Heart right ventricle (tissue), 16 donors: ENCODE measurements at regions of chr2 and their contacts with region 1.

Region 1: GRCh38 chr2:66434679-66435548 is at the start of gene MEIS1:
- DNase-seq: peak; percentile 87 to 92
- ATAC-seq: peak; percentile 84 to 91 (median 88)
- H3K4me3 ChIP-seq: peak within 1 kb of the TSS; percentile 39 to 87 (median 78)
- H3K27ac ChIP-seq: peak within 1 kb of the TSS; percentile 74 to 95 (median 90)
- H3K4me1 ChIP-seq: peaks cover 0 to 33% (median 0%) of the 10 kb centered on the region in 9 donors
- H3K27me3 ChIP-seq: peaks cover 0 to 98% (median 0%) of the 10 kb centered on the region in 7 donors
- CTCF ChIP-seq: no peak
- total RNA-seq, gene MEIS1: 24.8 to 63.8 (median 38.6) TPM

Region 2: DNA sequence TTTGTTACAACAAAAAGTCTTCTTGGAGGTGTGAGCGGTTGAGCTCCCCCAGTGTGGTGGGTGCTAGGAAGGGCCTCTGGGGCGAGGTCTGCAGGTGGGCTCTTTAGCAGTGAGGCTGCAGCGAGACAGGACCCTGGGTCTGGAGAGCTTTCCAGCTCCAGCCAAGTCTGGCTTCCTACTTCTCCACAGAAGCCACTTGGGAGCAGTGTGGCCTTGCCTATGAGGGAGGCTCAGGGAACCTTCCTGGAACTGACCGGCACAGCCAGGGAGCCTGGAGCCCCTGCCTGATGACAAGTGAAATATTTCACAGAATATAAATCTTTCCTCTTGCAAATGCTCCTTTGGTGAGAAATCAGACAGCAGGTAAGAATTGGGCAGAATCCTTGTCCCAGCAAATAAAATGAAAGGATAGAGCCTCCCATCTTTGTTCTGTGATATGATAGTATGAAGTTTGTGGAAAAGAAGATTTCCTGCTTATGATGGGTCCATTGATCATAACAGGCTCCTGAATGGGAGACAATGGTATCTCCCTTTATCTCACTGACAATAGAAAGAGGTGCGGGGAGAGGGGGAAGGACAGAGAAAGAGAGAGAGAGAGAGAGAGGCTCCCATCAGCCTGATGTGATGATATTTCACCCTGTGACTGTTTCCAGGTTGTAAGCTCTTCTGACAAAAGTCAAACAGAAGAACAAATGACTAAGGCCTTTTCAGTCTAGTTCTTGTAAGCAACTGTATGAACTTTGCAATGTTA is 712.7 kb before region 1 on chr2:
- intact Hi-C with region 1: loop called in 1 of 10 experiments (anchors 2 kb)
- DNase-seq: peak; percentile 20 to 32
- ATAC-seq: peak; percentile 79 to 93 (median 86)
- H3K4me3 ChIP-seq: no peak overlapping the region
- H3K27ac ChIP-seq: no peak overlapping the region
- H3K4me1 ChIP-seq: no peaks in the 10 kb centered on the region
- H3K27me3 ChIP-seq: peaks cover 0 to 10% (median 0%) of the 10 kb centered on the region in 7 donors
- CTCF ChIP-seq: peak in 8 of 9 donors; percentile 17 to 63 (median 46)

Region 3: DNA sequence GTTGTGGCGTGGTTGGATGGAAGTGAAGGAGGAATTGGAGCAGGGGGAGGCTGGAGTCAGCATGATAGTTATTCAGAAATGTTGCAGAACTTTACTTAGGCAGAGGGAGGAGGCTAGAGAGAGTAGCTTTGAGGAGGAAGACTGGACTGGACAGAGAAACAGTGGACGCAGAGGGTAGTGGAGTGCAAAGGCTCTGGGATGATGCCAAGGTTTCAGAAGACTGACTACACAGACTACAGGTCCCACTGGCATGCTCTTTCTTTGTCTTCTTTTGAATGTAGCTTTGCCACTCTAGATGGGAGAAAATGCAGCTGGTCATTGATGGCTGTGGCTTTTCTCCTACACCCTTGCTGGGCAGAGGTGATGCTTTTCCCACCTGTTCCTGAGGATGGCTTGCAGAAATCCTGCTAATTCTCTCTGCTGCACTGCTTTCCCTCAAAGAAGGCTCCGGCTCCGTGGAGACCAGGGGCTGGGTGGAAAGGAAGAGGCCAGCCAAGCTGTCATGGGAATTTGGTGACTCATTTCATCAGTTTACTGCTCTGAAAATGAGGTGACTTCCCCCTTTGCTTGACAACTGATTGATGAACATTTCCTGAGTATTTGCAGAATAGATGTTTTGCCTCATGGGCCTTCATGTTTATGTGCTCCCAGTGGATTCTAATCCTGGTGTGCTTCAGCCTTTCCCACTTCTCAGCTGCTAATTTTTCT is 42.4 kb after region 1 on chr2:
- intact Hi-C with region 1: no loop called
- DNase-seq: no peak
- ATAC-seq: peak in 2 of 8 donors; percentile 31 to 38
- H3K4me3 ChIP-seq: no peak overlapping the region
- H3K27ac ChIP-seq: peak overlapping the region in 6 of 10 donors; percentile 19 to 74 (median 66)
- H3K4me1 ChIP-seq: peaks cover 2 to 62% (median 49%) of the 10 kb centered on the region in 9 donors
- H3K27me3 ChIP-seq: no peaks in the 10 kb centered on the region
- CTCF ChIP-seq: no peak

Region 4: GRCh38 chr2:66495788-66496640 is 61.1 kb after region 1 on chr2:
- intact Hi-C with region 1: loop called in 6 of 10 experiments (anchors 5 to 10 kb)
- DNase-seq: peak in 1 of 2 donors; percentile 44
- ATAC-seq: peak; percentile 44 to 84 (median 79)
- H3K4me3 ChIP-seq: no peak overlapping the region
- H3K27ac ChIP-seq: peak overlapping the region in 9 of 10 donors; percentile 11 to 74 (median 69)
- H3K4me1 ChIP-seq: peaks cover 3 to 54% (median 34%) of the 10 kb centered on the region in 9 donors
- H3K27me3 ChIP-seq: no peaks in the 10 kb centered on the region
- CTCF ChIP-seq: peak in 4 of 9 donors; percentile 6 to 38 (median 30)

Region 5: DNA sequence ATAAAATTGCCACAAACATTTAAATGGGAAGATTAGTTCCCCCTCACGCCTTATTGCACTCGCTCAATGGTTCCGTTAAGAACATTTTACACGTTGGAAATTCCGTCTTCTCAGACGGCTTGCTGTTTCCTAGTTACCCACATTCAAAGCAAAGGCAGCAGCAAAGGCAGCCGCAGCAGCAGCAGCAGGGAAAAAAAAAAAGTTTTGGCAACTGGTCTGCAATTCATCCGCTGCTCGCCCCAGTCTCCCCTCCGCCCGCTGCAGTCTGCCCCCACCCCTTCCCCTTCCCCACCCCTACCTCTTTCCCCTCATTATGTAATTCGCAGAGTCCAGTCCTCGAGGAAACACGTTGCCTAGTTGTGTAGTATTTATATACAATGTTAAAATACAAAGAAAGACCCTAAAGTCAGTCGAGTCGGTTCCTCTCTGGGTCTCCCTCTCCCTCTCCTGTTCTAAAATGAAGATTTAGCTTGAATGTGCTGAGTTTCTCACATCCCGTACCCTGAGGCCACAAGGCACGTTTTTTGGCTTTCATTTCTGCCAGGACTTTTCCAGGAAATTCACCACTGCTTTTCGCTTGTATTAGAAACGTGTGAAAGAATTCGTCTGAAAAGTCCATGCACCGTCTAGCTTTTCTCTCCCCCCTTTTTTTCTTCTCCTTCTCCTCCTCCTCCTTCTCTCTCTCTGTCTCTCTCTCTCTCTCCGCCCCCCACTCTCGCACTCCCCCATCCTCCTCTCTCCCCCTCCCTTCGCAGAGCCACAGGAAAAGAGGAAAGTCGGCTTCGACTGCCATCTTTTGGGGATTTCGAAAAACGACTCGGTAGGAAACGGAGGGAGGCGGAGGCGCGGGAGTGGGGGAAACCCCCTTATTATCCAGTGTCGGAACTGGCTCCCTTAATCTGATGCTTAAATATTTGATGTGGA is 140.0 kb after region 1 on chr2:
- intact Hi-C with region 1: loop called in 9 of 10 experiments (anchors 2 to 5 kb)
- DNase-seq: peak; percentile 27 to 77
- ATAC-seq: peak; percentile 68 to 83 (median 76)
- H3K4me3 ChIP-seq: peak overlapping the region in 9 of 10 donors; percentile 30 to 63 (median 50)
- H3K27ac ChIP-seq: peak overlapping the region in 5 of 10 donors; percentile 9 to 64 (median 56)
- H3K4me1 ChIP-seq: peaks cover 16 to 46% (median 23%) of the 10 kb centered on the region in 9 donors
- H3K27me3 ChIP-seq: peaks cover 13 to 73% (median 46%) of the 10 kb centered on the region in 7 donors
- CTCF ChIP-seq: peak in 8 of 9 donors; percentile 21 to 70 (median 50)

Region 6: GRCh38 chr2:67561457-67561965 is 1126.6 kb after region 1 on chr2:
- intact Hi-C with region 1: loop called in 1 of 10 experiments (anchors 10 kb)
- DNase-seq: peak; percentile 51 to 77
- ATAC-seq: peak in 7 of 8 donors; percentile 39 to 97 (median 85)
- H3K4me3 ChIP-seq: no peak overlapping the region
- H3K27ac ChIP-seq: peak overlapping the region; percentile 40 to 82 (median 76)
- H3K4me1 ChIP-seq: peaks cover 0 to 24% (median 6%) of the 10 kb centered on the region in 9 donors
- H3K27me3 ChIP-seq: no peaks in the 10 kb centered on the region
- CTCF ChIP-seq: no peak

Region 7: GRCh38 chr2:67846370-67847070 is 1411.6 kb after region 1 on chr2:
- intact Hi-C with region 1: loop called in 4 of 10 experiments (anchors 5 to 10 kb)
- DNase-seq: peak; percentile 41 to 81
- ATAC-seq: peak; percentile 71 to 91 (median 78)
- H3K4me3 ChIP-seq: peak overlapping the region in 5 of 10 donors; percentile 14 to 31 (median 27)
- H3K27ac ChIP-seq: no peak overlapping the region
- H3K4me1 ChIP-seq: peaks cover 0 to 19% (median 0%) of the 10 kb centered on the region in 9 donors
- H3K27me3 ChIP-seq: peaks cover 0 to 3% (median 0%) of the 10 kb centered on the region in 7 donors
- CTCF ChIP-seq: peak; percentile 45 to 81 (median 75)